ENCODE measurements at regions of chr2 and their contacts with region 1.

Region 1: DNA sequence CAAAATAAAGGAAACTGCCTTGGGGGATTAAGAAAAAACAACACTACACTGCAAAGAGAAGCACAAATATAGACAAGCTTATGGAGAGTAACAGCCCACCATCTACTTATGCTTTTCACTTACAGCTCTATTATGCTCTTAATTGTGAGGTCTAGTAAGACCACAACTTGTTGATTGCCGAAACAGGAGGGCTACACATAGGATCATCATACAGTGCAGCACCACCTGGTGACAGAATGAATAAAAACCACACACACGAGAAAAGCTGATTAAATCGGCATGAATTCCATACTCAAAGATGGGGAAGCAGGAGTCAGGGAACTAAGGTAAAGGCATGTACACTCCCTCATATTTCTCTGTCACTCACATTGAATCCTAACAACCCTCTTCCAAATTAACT is 259.2 kb downstream of the IKZF2 start:
- DNase-seq: no peak
- H3K4me3 ChIP-seq: no peak overlapping the region
- CTCF ChIP-seq: peak; percentile 28

Region 2: GRCh38 chr2:212686285-212686895 is 205.8 kb before region 1 on chr2:
- CTCF ChIA-PET with region 1: interaction called, 10 read pairs
- POLR2A ChIA-PET with region 1: no interaction called
- DNase-seq: peak; percentile 5
- H3K4me3 ChIP-seq: no peak overlapping the region
- CTCF ChIP-seq: peak; percentile 68

Region 3: GRCh38 chr2:212752730-212753351 is 139.4 kb before region 1 on chr2:
- CTCF ChIA-PET with region 1: no interaction called
- POLR2A ChIA-PET with region 1: no interaction called
- DNase-seq: no peak
- H3K4me3 ChIP-seq: no peak overlapping the region
- CTCF ChIP-seq: no peak

Region 4: GRCh38 chr2:212777020-212777491 is 115.1 kb before region 1 on chr2:
- CTCF ChIA-PET with region 1: interaction called, 41 read pairs
- POLR2A ChIA-PET with region 1: no interaction called
- DNase-seq: no peak
- H3K4me3 ChIP-seq: peak overlapping the region; percentile 7; the same call in 1 of the 2 replicates
- CTCF ChIP-seq: peak; percentile 48

Region 5: DNA sequence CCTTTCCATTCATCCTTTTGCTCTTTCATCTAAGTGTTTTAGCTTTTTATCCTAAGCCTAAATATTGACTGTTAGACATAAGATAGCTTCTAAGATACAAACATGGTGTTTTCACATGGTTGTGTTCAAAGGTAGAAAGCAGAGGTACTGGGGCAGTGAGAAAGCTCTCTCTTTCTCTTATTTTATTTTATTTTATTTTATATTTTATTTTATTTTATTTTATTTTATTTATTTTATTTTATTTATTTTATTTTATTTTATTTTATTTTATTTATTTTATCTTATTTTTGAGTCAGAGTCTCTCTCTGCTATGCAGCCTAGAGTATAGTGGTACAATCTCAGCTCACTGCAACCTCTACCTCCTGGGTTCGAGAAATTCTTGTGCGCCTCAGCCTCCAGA is 28.0 kb before region 1 on chr2:
- CTCF ChIA-PET with region 1: interaction called, 10 read pairs
- POLR2A ChIA-PET with region 1: no interaction called
- DNase-seq: no peak
- H3K4me3 ChIP-seq: no peak overlapping the region
- CTCF ChIP-seq: no peak

Region 6: DNA sequence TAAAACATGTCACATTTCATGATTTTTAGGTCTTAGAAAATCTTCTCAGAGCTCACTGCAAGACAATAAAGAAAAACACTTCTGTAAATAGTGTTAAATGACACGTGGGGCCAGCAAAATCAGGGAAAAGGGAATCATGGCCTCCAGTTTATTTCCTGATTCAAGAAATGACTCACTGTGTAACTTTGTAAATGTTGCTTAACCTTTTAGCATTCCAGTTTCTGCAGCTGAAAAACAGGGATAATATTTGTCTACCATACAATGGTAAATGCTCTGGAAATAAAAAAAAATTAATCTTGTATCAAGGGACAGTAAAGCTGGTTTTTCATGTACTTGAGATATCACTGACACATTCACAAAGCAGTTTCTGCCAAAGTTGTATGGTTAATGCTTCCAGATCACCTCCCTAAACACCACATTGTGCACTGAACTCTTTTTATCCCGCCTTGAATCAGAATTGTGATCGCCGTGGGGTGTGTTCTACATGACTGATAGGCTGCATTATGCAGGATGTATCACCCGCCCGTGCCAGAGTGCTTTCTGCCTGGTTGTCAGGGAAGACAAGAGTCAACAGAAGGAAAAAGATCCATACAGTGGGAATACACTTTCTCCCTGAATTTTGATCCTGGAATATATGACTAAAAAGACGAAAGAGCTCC is 20.4 kb after region 1 on chr2:
- CTCF ChIA-PET with region 1: interaction called, 21 read pairs
- POLR2A ChIA-PET with region 1: no interaction called
- DNase-seq: no peak
- H3K4me3 ChIP-seq: no peak overlapping the region
- CTCF ChIP-seq: no peak

Region 7: DNA sequence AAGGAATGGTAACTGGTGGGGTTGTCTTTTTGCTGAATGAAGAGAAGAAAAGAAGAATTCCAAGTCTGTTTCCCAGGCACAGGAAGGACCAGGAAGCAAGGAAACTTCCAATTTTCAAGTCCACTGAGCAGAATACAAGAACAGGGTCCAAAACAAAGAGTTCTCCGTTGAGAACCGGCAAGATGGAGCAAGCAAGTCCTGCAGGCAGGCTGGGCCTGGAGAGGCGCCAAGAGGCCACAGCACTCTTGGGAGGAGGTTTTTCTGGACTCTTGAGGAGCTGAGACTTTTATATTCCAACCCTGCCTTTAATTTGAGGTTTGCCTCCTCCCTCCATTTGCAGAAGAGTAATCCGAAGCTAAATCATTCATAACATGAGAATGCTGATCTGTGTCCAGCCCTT is 34.7 kb after region 1 on chr2:
- CTCF ChIA-PET with region 1: no interaction called
- POLR2A ChIA-PET with region 1: no interaction called
- DNase-seq: no peak
- H3K4me3 ChIP-seq: no peak overlapping the region
- CTCF ChIP-seq: no peak

Measured in AG04449 (cell line).